Activated CD8-positive, alpha-beta T cell treated with anti-CD3 and anti-CD28 coated beads, Interleukin-2, amount 10 ng/mL, durations not matched to agents 7 days and 5 days (primary cell): ENCODE measurements at regions of chr7 and their contacts with region 1.

Region 1: DNA sequence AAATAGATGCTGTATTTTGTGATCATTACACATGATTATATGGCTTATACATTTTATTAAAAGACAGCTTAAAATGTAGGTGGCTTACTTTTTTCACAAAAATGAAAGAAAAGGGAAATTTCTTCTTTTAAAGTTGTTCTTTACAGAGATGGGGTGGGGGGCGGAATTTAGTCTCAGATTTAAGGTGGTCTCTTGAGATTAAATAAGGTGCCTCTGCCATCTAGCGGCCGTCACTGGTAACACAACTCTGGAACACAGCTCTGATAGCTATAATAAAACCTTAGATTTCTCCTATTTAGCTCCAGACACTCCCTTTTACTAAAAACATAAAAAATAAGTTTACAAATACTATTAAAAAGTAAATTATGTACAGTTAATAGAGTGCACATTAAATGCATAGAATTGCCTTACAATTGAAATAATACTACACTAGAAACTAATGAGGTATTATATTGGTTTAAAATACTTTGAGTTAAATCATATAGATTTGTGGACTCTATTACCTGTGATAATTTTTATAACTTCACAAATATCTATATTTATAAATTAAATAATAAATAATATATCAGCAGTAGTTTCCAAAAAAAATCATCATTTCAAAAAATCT is 210.9 kb downstream of the DGKB start:
- DNase-seq: peak; percentile 52
- ATAC-seq: no peak
- H3K4me3 Mint-ChIP-seq: no peak overlapping the region
- H3K27ac Mint-ChIP-seq: no peak overlapping the region
- H3K4me1 Mint-ChIP-seq: no peaks in the 10 kb centered on the region
- H3K27me3 Mint-ChIP-seq: no peaks in the 10 kb centered on the region

Region 2: GRCh38 chr7:13279854-13280435 is 1411.8 kb before region 1 on chr7:
- CTCF ChIA-PET with region 1: interaction called, 16 read pairs
- POLR2A ChIA-PET with region 1: no interaction called
- DNase-seq: no peak
- ATAC-seq: no peak
- H3K4me3 Mint-ChIP-seq: no peak overlapping the region
- H3K27ac Mint-ChIP-seq: no peak overlapping the region
- H3K4me1 Mint-ChIP-seq: no peaks in the 10 kb centered on the region
- H3K27me3 Mint-ChIP-seq: no peaks in the 10 kb centered on the region

Region 3: GRCh38 chr7:14761510-14762296 is 70.0 kb after region 1 on chr7:
- CTCF ChIA-PET with region 1: no interaction called
- POLR2A ChIA-PET with region 1: no interaction called
- DNase-seq: no peak
- ATAC-seq: no peak
- H3K4me3 Mint-ChIP-seq: no peak overlapping the region
- H3K27ac Mint-ChIP-seq: no peak overlapping the region
- H3K4me1 Mint-ChIP-seq: no peaks in the 10 kb centered on the region
- H3K27me3 Mint-ChIP-seq: no peaks in the 10 kb centered on the region